Breast epithelium (tissue), 4 donors: ENCODE measurements at regions of chr12 and their contacts with region 1.

Region 1: DNA sequence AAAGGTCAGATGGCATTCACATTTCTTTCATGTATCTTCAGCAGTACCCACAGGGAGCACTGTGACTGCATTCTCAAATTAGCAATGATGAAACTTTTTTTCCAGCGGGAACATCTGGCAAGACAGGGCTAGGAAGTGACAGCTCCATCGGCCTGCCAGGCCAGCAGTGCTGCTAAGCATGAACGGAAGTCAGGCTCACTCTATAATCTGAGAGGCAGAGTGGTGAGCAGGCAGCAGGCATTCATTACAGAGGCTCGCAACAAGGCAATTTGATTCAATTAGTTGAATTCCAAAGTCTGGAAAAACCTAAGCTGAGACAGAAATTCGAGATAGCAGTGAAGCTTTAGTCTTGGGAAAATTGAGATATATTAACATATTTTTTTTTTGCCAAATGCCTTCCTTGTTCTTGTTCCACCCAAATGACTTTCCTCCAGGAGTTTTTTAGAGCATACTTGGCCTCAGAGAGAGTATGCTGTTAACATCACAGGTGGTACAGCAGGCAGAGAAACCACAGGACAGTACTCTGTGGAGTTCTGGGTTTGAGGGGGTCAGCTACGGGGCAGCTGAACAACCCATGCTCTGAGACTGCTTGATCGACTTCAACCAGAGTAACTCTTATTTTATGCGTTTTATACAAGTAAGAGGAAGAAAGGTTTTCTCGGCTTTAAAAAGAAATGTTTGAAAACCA is 414.9 kb downstream of the APAF1 start:
- DNase-seq: no peak
- H3K4me3 ChIP-seq: no peak overlapping the region
- H3K27ac ChIP-seq: no peak overlapping the region
- H3K4me1 ChIP-seq: no peaks in the 10 kb centered on the region
- H3K27me3 ChIP-seq: no peaks in the 10 kb centered on the region
- CTCF ChIP-seq: no peak
- POLR2A ChIP-seq: no peak

Region 2: DNA sequence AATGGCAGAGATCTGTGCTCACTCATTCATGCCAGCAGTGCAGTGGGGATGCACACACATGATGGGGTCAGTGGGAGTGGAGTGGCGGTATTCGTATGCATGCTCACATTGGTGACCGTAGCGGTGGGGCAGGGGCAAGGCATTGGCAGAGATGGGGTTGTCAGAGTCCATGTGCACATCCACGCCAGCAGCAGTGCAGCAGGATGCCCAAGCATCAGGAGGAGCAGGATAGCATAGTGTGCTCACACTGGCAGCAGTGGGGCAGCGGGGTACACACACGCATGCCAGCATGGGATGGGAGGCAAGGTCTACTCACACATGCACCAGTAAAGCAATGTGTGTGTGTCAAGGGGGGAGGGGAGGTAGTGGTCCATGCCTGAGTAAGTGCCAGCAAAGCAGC is 498.1 kb after region 1 on chr12:
- intact Hi-C with region 1: loop called (anchors 5 kb)
- DNase-seq: no peak
- H3K4me3 ChIP-seq: no peak overlapping the region
- H3K27ac ChIP-seq: no peak overlapping the region
- H3K4me1 ChIP-seq: no peaks in the 10 kb centered on the region
- H3K27me3 ChIP-seq: no peaks in the 10 kb centered on the region
- CTCF ChIP-seq: no peak
- POLR2A ChIP-seq: no peak